B cell (primary cell): ENCODE measurements at regions of chr21 and their contacts with region 1.

Region 1: DNA sequence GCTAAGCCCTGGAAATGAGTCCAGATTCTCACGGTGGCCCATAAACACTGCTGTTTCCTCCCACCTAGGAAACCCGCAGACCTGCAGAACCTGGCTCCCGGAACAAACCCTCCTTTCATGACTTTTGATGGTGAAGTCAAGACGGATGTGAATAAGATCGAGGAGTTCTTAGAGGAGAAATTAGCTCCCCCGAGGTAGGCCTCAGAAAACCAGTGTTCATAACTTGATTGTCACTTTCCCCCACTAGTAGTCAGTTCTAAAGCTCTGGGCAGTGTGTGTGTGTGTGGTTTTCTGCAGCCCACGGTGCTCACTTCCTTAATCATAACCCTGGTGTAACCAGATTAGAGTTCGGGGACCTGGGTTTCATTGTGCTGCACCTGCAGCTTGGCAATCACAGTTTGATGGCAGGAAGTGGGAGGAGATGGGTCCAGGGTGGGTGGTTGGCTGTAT is 39.1 kb downstream of the CLIC6 start:
- DNase-seq: peak; percentile 14
- ATAC-seq: peak; percentile 51
- H3K4me3 ChIP-seq: no peak overlapping the region
- H3K4me3 Mint-ChIP-seq: peak overlapping the region; percentile 8
- H3K27ac ChIP-seq: no peak overlapping the region
- H3K27ac Mint-ChIP-seq: no peak overlapping the region
- H3K4me1 ChIP-seq: peaks cover 7% of the 10 kb centered on the region in 2 donors
- H3K4me1 Mint-ChIP-seq: peaks cover 7% of the 10 kb centered on the region
- H3K27me3 ChIP-seq: no peaks in the 10 kb centered on the region
- H3K27me3 Mint-ChIP-seq: peaks cover 10% of the 10 kb centered on the region
- CTCF ChIP-seq: no peak

Region 2: GRCh38 chr21:34693192-34693810 is 14.6 kb before region 1 on chr21:
- CTCF ChIA-PET with region 1: interaction called, 16 read pairs
- POLR2A ChIA-PET with region 1: no interaction called
- intact Hi-C with region 1: no loop called
- DNase-seq: peak; percentile 70
- ATAC-seq: peak; percentile 43
- H3K4me3 ChIP-seq: no peak overlapping the region
- H3K4me3 Mint-ChIP-seq: no peak overlapping the region
- H3K27ac ChIP-seq: no peak overlapping the region
- H3K27ac Mint-ChIP-seq: no peak overlapping the region
- H3K4me1 ChIP-seq: no peaks in the 10 kb centered on the region
- H3K4me1 Mint-ChIP-seq: no peaks in the 10 kb centered on the region
- H3K27me3 ChIP-seq: peaks cover 0 to 9% (median 1%) of the 10 kb centered on the region in 4 experiments
- H3K27me3 Mint-ChIP-seq: peaks cover 20% of the 10 kb centered on the region
- CTCF ChIP-seq: peak; percentile 96

Region 3: GRCh38 chr21:34771512-34772028 is 63.7 kb after region 1 on chr21:
- CTCF ChIA-PET with region 1: no interaction called
- POLR2A ChIA-PET with region 1: no interaction called
- intact Hi-C with region 1: no loop called
- DNase-seq: no peak
- ATAC-seq: no peak
- H3K4me3 ChIP-seq: no peak overlapping the region
- H3K4me3 Mint-ChIP-seq: no peak overlapping the region
- H3K27ac ChIP-seq: no peak overlapping the region
- H3K27ac Mint-ChIP-seq: no peak overlapping the region
- H3K4me1 ChIP-seq: no peaks in the 10 kb centered on the region
- H3K4me1 Mint-ChIP-seq: no peaks in the 10 kb centered on the region
- H3K27me3 ChIP-seq: peaks cover 0 to 3% (median 0%) of the 10 kb centered on the region in 4 experiments
- H3K27me3 Mint-ChIP-seq: peaks cover 12% of the 10 kb centered on the region
- CTCF ChIP-seq: no peak